ENCODE measurements at regions of chr2 and their contacts with region 1.

Region 1: DNA sequence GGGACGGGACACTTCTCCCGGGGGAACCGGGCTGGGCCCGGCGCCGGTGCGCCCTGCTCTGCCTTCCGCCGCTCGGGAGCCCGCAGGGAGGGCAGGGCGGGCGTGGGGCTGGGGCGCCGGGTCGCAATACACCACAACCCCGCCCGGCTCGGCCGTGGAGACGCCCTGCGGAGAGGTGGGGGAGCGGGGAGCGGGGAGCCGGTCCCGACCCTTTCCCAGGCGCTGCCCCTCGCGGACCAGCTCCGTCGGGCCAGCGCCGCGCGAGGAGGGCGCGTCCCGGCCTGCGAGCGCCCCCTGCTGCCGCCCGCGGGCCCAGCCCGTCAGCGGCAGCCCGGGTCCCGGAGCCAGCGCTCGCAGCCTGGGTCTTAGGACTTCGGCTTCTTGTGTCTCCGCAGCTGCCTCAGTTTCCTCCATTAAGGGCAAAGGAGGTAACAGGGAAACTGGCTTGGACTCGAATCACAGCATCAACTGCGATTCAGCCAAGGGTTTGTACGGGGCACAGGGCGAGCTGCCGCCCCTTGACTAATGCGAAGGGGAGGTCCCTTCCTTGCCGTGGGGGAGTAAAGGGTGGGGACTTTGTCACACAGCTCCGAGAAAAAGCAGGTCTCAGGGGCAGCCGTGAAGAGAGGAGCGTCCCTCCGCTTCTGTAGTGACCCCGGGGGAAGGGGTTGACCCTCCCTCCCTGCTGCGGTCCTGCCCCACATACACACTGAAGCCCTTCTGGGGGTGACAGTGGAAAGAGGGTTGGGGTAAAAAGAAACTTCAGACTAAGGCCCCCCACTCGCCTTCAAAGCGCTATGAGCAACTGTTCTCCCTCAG is 717 bp upstream of the ADRA2B start:
- DNase-seq: peak; percentile 50
- H3K4me3 Mint-ChIP-seq: peak overlapping the region; percentile 52
- H3K27ac Mint-ChIP-seq: no peak overlapping the region
- H3K4me1 Mint-ChIP-seq: peaks cover 17% of the 10 kb centered on the region
- H3K27me3 Mint-ChIP-seq: peaks cover 40% of the 10 kb centered on the region

Region 2: GRCh38 chr2:96024336-96025193 is 92.5 kb before region 1 on chr2:
- CTCF ChIA-PET with region 1: interaction called, 10 read pairs
- POLR2A ChIA-PET with region 1: no interaction called
- DNase-seq: no peak
- H3K4me3 Mint-ChIP-seq: no peak overlapping the region
- H3K27ac Mint-ChIP-seq: no peak overlapping the region
- H3K4me1 Mint-ChIP-seq: peaks cover 3% of the 10 kb centered on the region
- H3K27me3 Mint-ChIP-seq: no peaks in the 10 kb centered on the region

Region 3: DNA sequence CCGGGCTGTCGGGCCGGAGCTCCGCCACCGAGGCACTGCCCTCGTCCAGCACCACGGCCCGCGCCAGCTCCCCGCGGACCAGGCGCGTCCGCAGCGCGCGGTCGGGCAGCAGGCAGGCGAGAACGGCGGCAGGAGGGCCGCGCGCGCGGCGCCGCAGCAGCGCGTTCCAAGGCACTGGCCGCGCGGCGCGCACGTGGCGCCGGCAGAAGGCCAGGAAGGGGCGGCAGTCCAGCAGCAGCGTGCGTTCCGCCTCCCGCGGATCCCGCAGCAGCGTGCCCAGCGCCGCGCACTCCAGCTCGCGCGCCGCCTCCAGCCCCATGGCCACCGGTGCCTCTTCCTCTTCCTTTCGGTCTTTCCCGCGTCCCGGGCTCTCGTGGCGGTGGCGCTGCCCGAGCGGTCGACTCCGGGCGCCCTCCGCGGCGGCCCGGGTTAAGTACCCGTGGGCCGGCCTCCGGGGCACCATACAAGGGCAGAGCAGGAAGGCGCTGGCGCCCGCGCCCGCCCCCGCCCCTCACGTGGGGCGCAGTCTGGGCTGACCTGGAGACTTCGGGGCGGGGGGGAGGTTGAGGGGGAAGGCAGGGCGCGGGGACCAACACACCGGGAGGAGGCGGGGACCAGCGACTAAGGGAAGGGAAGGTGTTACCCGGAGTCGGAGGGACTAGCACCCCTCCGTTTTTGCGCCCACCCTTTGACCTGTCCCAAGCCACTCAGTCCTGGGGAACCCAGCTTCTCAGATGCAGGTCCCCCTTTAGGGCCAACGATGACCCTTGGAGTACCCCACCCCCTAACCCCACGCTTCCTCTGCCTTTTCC is 28.2 kb after region 1 on chr2 and contains the start of gene DUSP2:
- CTCF ChIA-PET with region 1: interaction called, 26 read pairs
- POLR2A ChIA-PET with region 1: no interaction called
- DNase-seq: peak; percentile 88
- H3K4me3 Mint-ChIP-seq: peak within 1 kb of the TSS; percentile 92
- H3K27ac Mint-ChIP-seq: peak within 1 kb of the TSS; percentile 98
- H3K4me1 Mint-ChIP-seq: peaks cover 67% of the 10 kb centered on the region
- H3K27me3 Mint-ChIP-seq: no peaks in the 10 kb centered on the region
- total RNA-seq, gene DUSP2: 11.9 to 14.2 TPM

Region 4: GRCh38 chr2:96225016-96225533 is 108.0 kb after region 1 on chr2:
- CTCF ChIA-PET with region 1: no interaction called
- POLR2A ChIA-PET with region 1: no interaction called
- DNase-seq: no peak
- H3K4me3 Mint-ChIP-seq: no peak overlapping the region
- H3K27ac Mint-ChIP-seq: no peak overlapping the region
- H3K4me1 Mint-ChIP-seq: peaks cover 9% of the 10 kb centered on the region
- H3K27me3 Mint-ChIP-seq: no peaks in the 10 kb centered on the region

Measured in activated CD4-positive, alpha-beta T cell treated with anti-CD3 and anti-CD28 coated beads, Interleukin-2, amount 10 ng/mL, durations not matched to agents 7 days and 5 days (primary cell).